Colonic mucosa (tissue), 4 donors: ENCODE measurements at regions of chr2 and their contacts with region 1.

Region 1: DNA sequence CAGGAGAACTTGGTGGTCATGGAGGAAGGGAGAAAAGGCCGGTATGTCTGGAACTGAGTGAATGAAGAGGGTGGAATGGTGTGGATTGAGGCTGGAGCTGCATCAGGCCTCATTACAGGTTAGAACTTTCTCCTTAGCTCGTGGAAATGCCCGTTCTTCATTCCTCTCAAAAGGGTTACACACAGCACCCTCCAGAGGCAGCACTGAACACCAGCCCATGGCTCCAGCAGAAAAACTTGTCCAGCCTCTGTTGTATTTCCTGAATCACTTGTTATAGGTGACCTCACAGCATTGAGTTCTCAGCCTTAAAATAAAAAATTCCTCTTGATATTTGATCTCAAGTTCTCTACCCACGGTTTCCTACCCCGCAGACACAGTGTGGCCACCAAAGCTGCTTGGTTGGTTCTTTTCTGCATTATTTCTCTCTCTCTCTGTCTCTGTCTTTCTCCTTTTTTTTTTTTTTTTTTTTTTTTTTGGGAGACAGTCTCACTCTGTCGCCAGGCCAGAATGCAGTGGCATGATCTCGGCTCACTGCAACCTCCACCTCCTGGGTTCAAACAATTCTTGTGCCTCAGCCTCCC is 89.6 kb downstream of the ITGB1BP1 start:
- DNase-seq: peak; percentile 75
- H3K4me3 ChIP-seq: no peak overlapping the region
- H3K27ac ChIP-seq: peak overlapping the region; percentile 81
- H3K4me1 ChIP-seq: peaks cover 13% of the 10 kb centered on the region
- H3K27me3 ChIP-seq: no peaks in the 10 kb centered on the region
- CTCF ChIP-seq: peak; percentile 44

Region 2: DNA sequence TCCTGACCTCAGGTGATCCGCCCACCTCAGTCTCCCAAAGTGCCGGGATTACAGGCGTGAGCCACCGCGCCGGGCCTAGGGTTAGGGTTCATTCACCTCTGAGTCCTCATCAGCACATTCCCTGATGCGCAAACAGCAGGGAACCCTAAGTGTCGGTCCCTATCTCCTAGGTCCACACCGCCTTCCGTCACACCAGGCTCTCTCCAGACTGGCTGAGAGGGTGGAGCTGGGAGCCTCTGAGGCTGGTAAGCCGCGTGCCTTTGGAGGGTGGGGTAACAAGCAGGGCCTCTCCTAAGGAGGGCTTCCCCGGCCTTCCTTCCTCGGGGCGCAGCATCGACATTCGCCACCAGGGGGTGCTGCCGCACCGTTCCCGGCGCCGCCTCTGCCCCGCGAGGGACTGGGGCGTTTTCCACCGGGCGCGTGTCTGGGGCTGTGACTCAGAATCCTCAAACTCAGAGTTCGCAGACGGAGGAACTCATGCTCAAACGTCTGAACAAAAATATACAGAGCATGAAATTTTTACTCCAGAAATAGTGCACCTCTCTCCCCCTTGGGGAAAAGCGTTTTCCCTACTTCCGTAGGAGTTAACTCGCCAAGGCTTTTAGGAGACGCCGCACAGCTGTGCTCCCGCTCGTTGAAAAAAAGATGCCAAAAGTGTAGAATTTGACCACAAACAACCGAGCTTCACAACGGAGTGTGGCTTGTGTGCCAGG is 191.0 kb before region 1 on chr2:
- intact Hi-C with region 1: loop called (anchors 2 kb)
- DNase-seq: peak; percentile 93
- H3K4me3 ChIP-seq: peak overlapping the region; percentile 22
- H3K27ac ChIP-seq: no peak overlapping the region
- H3K4me1 ChIP-seq: peaks cover 7% of the 10 kb centered on the region
- H3K27me3 ChIP-seq: no peaks in the 10 kb centered on the region
- CTCF ChIP-seq: peak; percentile 97

Region 3: DNA sequence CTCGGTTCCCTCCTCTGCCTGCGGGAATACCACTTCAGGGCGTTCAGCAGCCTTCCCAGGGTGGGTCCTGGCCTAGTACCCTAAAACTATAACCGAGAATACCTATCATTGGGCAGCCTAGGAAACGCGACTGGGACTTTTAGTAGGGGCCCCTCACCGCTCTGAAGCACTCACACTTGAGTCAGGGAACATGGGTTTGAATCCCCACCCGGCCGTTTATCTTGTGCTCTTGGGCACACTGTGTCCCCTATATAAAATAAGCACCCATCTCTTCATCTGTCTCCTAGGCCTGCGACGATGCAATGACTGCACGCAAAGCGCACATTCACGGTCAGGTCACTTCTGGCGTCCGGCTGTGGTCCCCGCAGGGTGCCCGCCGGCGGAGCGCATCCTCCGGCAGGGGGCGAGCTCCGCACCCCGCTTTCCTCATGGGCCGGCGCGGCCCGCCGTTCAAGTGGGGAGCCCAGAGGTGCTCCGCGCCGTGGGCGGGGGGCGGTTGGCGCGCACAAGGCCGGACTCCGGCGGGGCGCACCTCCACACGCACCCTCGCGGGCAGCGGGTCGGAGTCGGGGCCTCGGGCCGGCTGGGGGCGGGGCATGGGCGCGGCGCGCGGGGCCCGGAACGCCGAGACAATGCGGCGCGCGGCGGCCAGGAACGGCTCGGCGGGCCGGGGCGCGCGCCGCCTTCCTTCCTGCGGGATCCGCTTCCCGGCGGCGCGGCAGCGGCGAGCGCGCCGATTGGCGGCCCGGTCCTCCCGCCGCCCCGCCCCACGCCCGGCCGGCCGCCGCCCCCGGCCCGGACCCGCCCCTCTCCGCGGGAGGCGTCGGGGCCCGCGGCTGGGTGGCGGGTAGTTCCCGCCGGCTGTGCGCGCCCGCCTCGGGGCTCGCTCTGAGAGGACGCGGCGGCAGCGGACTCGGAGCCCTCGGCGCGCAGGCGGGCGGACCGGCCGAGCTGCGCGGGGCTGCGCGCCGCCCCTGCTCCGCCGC is 127.4 kb before region 1 on chr2 and contains the start of gene ASAP2:
- intact Hi-C with region 1: loop called (anchors 10 kb)
- DNase-seq: peak; percentile 71
- H3K4me3 ChIP-seq: peak within 1 kb of the TSS; percentile 82
- H3K27ac ChIP-seq: peak within 1 kb of the TSS; percentile 89
- H3K4me1 ChIP-seq: peaks cover 3% of the 10 kb centered on the region
- H3K27me3 ChIP-seq: no peaks in the 10 kb centered on the region
- CTCF ChIP-seq: peak; percentile 68
- total RNA-seq, gene ASAP2: 58.1 to 61.7 TPM

Region 4: GRCh38 chr2:9356292-9356691 is 22.6 kb after region 1 on chr2:
- intact Hi-C with region 1: no loop called
- DNase-seq: no peak
- H3K4me3 ChIP-seq: no peak overlapping the region
- H3K27ac ChIP-seq: no peak overlapping the region
- H3K4me1 ChIP-seq: no peaks in the 10 kb centered on the region
- H3K27me3 ChIP-seq: no peaks in the 10 kb centered on the region
- CTCF ChIP-seq: no peak